K562 (cell line): ENCODE measurements at regions of chr5 and their contacts with region 1.

Region 1: DNA sequence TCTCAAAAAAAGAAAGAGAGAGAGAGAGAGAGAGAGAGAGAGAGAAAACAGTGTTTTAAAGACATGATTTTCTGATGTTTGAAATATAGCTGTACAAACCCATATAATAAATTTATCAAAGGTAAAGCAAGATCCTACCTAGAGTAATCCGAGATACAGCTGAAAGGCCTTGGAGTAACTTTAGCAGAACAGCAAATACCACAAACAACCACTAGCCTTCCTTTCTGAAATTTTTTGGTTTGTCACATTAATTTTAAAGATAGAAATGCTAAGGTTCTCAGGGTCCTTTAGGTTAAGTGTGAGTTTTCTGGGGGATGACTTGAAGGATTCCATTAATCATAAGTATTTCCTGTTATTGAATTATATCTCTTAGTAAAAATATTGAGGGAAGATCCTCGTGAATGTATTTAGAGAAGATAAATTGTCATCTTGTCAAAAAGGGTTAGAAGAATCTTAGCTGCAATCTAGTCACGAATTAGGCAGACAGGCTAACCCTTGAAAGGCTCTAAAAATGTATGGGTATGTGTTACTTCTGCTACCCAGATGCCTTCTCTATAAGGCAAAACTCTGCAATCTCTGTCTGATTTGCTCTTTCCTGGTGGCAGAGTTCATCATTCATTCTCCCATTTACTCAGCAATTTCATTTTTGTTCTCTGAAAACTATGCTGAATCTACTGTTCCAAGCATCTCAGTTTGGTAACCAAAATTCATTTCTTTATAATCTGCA is 27.3 kb downstream of the F2RL2 start:
- DNase-seq: no peak
- ATAC-seq: no peak
- H3K4me3 ChIP-seq: no peak overlapping the region
- H3K27ac ChIP-seq: no peak overlapping the region
- H3K4me1 ChIP-seq: no peaks in the 10 kb centered on the region
- H3K27me3 ChIP-seq: no peaks in the 10 kb centered on the region
- CTCF ChIP-seq: no peak
- EP300 ChIP-seq: no peak
- POLR2A ChIP-seq: no peak
- RAD21 ChIP-seq: no peak

Region 2: DNA sequence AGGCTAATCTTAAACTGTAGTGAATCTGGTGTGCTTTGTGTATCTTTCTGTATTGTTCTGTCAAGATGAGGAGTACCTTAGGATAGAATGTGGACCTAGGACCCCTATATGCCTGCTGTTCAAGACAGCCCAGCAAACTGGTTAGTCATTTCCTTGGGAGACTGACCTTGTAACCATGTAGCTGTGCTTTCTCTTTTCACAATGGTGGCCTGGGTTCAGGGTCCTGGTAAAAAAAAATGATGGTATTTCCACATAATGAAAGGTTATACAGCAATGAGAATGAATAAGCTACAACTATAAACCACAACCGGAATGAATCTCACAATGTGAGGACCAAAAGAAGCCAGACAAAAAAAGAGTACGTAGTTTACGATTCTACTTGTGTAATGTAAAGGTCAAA is 186.5 kb after region 1 on chr5:
- CTCF ChIA-PET with region 1: no interaction called
- POLR2A ChIA-PET with region 1: no interaction called
- in situ Hi-C with region 1: loop called (anchors 5 kb)
- intact Hi-C with region 1: no loop called
- DNase-seq: no peak
- ATAC-seq: no peak
- H3K4me3 ChIP-seq: no peak overlapping the region
- H3K27ac ChIP-seq: no peak overlapping the region
- H3K4me1 ChIP-seq: no peaks in the 10 kb centered on the region; a peak in 1 of 5 replicates
- H3K27me3 ChIP-seq: peaks cover 0 to 2% of the 10 kb centered on the region in 2 experiments; a peak in 2 of 5 replicates
- CTCF ChIP-seq: no peak
- EP300 ChIP-seq: no peak
- POLR2A ChIP-seq: no peak
- RAD21 ChIP-seq: no peak

Region 3: GRCh38 chr5:77086689-77087483 is 491.0 kb after region 1 on chr5 and contains the start of gene ZBED3:
- CTCF ChIA-PET with region 1: no interaction called
- POLR2A ChIA-PET with region 1: no interaction called
- in situ Hi-C with region 1: no loop called
- intact Hi-C with region 1: no loop called
- DNase-seq: no peak
- ATAC-seq: no peak
- H3K4me3 ChIP-seq: no peak within 1 kb of the TSS
- H3K27ac ChIP-seq: no peak within 1 kb of the TSS
- H3K4me1 ChIP-seq: peaks cover 0 to 5% of the 10 kb centered on the region in 2 experiments; a peak in 1 of 5 replicates
- H3K27me3 ChIP-seq: peaks cover 3 to 20% of the 10 kb centered on the region in 2 experiments; a peak in 4 of 5 replicates
- CTCF ChIP-seq: no peak
- EP300 ChIP-seq: no peak
- POLR2A ChIP-seq: no peak
- RAD21 ChIP-seq: no peak
- polyA plus RNA-seq, gene ZBED3: 0.01 to 0.03 TPM